T-cell (primary cell): ENCODE measurements at regions of chr2 and their contacts with region 1.

Region 1: DNA sequence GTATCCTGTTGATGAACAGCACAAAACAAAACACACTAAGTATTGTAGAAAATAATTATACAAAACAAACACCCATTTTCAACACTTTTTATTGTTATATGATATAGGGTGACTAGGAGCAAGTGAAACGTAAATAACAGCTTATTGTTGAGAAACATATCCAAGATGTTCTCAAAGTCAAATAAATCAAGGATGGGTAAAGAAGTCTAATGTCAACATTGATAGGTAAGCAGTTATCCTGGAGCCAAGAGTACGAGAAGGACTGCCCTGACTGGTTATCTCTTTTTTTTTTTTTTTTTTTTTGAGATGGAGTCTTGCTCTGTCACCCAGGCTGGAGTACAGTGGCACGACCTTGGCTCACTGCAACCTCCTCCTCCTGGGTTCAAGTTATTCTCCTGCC is 40.6 kb downstream of the PGAP1 start:
- DNase-seq: no peak
- ATAC-seq: no peak
- H3K4me3 ChIP-seq: no peak overlapping the region
- H3K4me3 Mint-ChIP-seq: no peak overlapping the region
- H3K27ac ChIP-seq: no peak overlapping the region
- H3K27ac Mint-ChIP-seq: no peak overlapping the region
- H3K4me1 ChIP-seq: no peaks in the 10 kb centered on the region
- H3K4me1 Mint-ChIP-seq: peaks cover 0 to 6% (median 0%) of the 10 kb centered on the region in 3 donors
- H3K27me3 ChIP-seq: no peaks in the 10 kb centered on the region
- H3K27me3 Mint-ChIP-seq: no peaks in the 10 kb centered on the region

Region 2: GRCh38 chr2:196630531-196630930 is 255.3 kb before region 1 on chr2:
- CTCF ChIA-PET with region 1: no interaction called
- POLR2A ChIA-PET with region 1: interaction called in 1 of 2 experiments, 10 read pairs
- DNase-seq: no peak
- ATAC-seq: no peak
- H3K4me3 ChIP-seq: no peak overlapping the region
- H3K4me3 Mint-ChIP-seq: no peak overlapping the region
- H3K27ac ChIP-seq: no peak overlapping the region
- H3K27ac Mint-ChIP-seq: no peak overlapping the region
- H3K4me1 ChIP-seq: no peaks in the 10 kb centered on the region
- H3K4me1 Mint-ChIP-seq: no peaks in the 10 kb centered on the region
- H3K27me3 ChIP-seq: peaks cover 0 to 8% of the 10 kb centered on the region in 2 experiments
- H3K27me3 Mint-ChIP-seq: peaks cover 8 to 20% of the 10 kb centered on the region in 2 donors

Region 3: GRCh38 chr2:196853301-196854087 is 32.4 kb before region 1 on chr2:
- CTCF ChIA-PET with region 1: no interaction called
- POLR2A ChIA-PET with region 1: interaction called in 1 of 2 experiments, 10 read pairs
- DNase-seq: no peak
- ATAC-seq: no peak
- H3K4me3 ChIP-seq: no peak overlapping the region
- H3K4me3 Mint-ChIP-seq: no peak overlapping the region
- H3K27ac ChIP-seq: no peak overlapping the region
- H3K27ac Mint-ChIP-seq: peak overlapping the region in 1 of 2 donors; percentile 25
- H3K4me1 ChIP-seq: no peaks in the 10 kb centered on the region
- H3K4me1 Mint-ChIP-seq: no peaks in the 10 kb centered on the region
- H3K27me3 ChIP-seq: no peaks in the 10 kb centered on the region
- H3K27me3 Mint-ChIP-seq: no peaks in the 10 kb centered on the region